ENCODE measurements at regions of chr12 and their contacts with region 1.

Region 1: DNA sequence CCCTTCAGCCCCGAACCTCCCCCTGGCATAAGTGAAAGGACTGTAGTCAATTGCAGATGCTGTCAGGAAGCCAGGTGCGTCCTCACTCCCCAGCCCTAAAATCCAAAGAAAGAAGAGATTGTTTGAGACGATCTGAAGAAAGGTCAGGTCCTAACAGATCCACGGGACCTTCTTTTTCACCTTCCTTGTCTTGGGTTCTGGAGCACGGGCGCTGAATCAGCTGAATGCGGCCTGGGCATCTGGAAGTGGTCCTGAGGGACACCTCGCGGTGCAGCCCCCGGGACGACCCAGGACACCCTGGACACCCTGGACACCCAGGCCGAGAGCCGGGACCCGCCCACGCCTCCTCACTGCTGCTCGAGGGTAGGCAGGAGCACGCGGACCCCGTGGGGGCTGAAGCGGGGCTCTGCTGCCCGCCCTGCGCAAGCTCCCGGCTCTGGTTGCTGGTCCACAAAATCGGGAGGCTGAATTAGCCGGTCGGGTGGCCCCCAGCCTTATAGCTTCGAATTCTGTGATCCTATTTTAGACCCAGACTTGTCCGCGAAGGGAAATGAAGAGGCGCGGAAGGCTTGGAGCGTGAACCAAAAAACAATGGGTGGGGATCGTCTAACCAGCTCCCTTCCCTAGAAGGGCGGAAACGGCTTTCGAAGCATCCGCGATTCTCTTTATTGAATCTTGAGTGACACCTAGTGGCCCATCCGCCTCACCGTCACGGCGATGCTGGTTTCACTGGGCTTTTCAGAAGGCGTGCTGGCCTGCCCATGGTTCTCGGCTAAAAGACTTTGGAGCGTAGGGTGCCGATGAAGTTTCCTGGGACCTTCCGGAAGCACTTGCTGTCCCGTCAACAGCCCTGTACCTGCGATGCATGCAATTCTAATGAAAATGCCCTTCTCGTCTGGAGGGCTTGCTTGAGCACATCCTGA is 46.4 kb upstream of the PLXNC1 start:
- DNase-seq: no peak
- H3K4me3 ChIP-seq: peak overlapping the region; percentile 56
- H3K27me3 ChIP-seq: peaks cover 2% of the 10 kb centered on the region; the same call in 1 of the 2 replicates
- CTCF ChIP-seq: peak; percentile 78

Region 2: DNA sequence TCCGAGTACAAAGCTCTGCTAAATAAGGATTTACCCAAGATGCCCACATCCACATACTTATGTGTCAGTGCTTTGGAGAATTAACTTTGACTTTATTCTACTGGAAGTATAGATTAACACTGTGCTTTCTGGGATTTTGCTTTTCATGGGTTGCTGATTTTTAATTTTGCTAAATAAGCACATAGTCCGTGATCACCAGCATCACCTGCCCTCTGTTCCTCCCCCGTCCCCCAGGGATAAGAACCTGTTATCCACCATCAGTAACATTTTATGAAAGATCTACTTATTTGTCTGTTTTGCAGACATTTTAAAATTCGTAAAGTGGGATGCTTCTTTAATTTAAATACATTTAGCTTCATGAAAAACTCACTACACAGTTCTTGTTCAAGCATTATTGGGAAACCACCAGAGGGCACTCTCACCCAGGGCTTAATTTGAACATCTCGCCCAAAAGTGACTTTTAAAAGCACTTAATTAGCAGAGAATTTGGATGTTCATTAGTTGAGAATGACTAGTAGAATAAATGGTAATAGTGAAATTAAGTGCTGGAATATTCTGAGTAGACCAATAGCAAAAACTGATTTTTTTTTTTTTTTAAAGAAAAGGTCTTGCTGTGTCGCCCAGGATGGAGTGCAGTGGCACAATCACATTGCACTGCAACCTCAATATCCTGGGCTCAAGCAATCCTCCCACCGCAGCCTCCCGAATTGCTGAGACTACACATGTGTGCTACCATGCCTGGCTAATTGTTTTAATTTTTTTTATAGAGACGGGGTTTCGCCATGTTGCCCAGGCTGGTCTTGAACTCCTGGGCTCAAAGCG is 599.0 kb before region 1 on chr12:
- CTCF ChIA-PET with region 1: interaction called, 154 read pairs
- POLR2A ChIA-PET with region 1: no interaction called
- DNase-seq: no peak
- H3K4me3 ChIP-seq: no peak overlapping the region
- H3K27me3 ChIP-seq: no peaks in the 10 kb centered on the region
- CTCF ChIP-seq: peak; percentile 80

Region 3: GRCh38 chr12:93569656-93570551 is 532.1 kb before region 1 on chr12:
- CTCF ChIA-PET with region 1: interaction called, 102 read pairs
- POLR2A ChIA-PET with region 1: interaction called, 3 read pairs
- DNase-seq: no peak
- H3K4me3 ChIP-seq: peak overlapping the region; percentile 93
- H3K27me3 ChIP-seq: no peaks in the 10 kb centered on the region
- CTCF ChIP-seq: peak; percentile 93

Region 4: GRCh38 chr12:93748672-93749383 is 353.2 kb before region 1 on chr12:
- CTCF ChIA-PET with region 1: interaction called, 10 read pairs
- POLR2A ChIA-PET with region 1: no interaction called
- DNase-seq: no peak
- H3K4me3 ChIP-seq: no peak overlapping the region
- H3K27me3 ChIP-seq: no peaks in the 10 kb centered on the region
- CTCF ChIP-seq: no peak

Region 5: DNA sequence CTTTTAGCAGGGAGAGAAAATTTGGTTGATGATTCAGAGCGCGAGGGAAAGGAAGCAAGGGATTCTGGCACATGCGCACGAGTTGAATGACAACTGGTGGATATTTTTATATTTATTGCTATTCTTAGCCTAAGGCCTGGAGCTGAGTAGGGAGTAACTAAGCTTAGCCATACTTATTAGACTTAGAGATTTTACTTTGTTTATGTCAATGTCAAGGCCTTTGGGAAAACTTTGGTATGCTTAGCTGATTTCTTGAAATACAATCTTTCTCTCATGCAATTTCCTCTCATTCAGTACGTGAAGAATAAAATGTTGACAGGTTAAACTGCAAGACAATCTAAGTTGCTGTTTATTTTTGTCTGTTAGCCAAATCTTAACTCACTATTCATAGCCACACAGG is 323.7 kb before region 1 on chr12:
- CTCF ChIA-PET with region 1: interaction called, 18 read pairs
- POLR2A ChIA-PET with region 1: no interaction called
- DNase-seq: peak; percentile 89
- H3K4me3 ChIP-seq: no peak overlapping the region
- H3K27me3 ChIP-seq: no peaks in the 10 kb centered on the region
- CTCF ChIP-seq: no peak

Region 6: GRCh38 chr12:93825931-93826555 is 276.0 kb before region 1 on chr12:
- CTCF ChIA-PET with region 1: interaction called, 13 read pairs
- POLR2A ChIA-PET with region 1: no interaction called
- DNase-seq: peak; percentile 57
- H3K4me3 ChIP-seq: no peak overlapping the region
- H3K27me3 ChIP-seq: no peaks in the 10 kb centered on the region
- CTCF ChIP-seq: no peak

Region 7: DNA sequence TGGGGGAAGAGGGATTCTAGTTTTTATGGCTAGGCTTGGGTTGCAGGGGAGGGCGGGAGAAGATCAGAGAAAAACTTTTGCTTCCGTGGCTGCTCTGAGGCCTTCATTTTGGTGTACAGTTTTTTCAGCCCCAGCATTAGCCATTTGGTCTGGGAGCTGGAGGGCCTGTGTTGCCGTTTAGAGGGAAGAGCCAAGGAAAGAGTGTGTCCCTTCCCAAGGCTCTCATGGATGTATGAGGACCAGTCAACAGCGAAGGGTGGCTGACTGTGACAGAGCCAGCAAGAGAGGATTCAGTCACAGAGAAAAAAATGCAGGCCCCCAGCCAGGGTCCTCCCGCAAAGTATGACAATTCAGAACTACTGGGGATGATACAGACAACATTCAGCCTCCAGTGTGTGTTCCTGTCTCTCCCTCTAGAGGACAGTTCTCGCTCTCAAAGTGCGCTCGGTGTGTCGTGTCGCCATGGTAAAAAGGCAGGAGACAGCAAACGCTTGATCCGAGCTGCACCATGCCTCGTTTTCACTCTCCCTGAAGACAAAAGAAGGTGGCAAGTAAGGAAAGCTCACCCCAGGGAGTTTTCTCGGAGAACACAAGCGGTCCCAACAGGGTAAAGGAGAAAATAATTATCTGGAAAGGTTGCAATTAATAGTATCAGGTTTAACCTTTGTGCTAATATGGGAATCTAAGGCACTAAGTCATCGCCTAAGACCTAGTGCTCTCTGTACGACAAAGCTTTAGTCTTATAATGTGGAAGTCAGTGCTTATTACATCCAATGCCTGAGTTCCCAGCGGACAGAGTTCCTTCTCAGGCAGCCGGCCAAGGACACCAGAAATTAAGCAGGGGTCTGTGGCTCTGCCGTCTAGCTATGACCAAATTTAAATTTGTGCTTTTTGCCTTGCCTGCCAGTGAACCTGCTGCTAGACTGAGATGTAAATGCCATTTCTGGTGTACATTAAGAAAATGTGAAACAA is 110.9 kb before region 1 on chr12:
- CTCF ChIA-PET with region 1: interaction called, 26 read pairs
- POLR2A ChIA-PET with region 1: no interaction called
- DNase-seq: no peak
- H3K4me3 ChIP-seq: no peak overlapping the region
- H3K27me3 ChIP-seq: no peaks in the 10 kb centered on the region
- CTCF ChIP-seq: peak; percentile 65

Region 8: GRCh38 chr12:94062796-94063635 is 39.0 kb before region 1 on chr12:
- CTCF ChIA-PET with region 1: no interaction called
- POLR2A ChIA-PET with region 1: no interaction called
- DNase-seq: no peak
- H3K4me3 ChIP-seq: no peak overlapping the region
- H3K27me3 ChIP-seq: peaks cover 4% of the 10 kb centered on the region; the same call in 1 of the 2 replicates
- CTCF ChIP-seq: no peak